Left cardiac atrium (tissue), 4 donors: ENCODE measurements at regions of chr2 and their contacts with region 1.

Region 1: GRCh38 chr2:127479219-127479825 is 47.0 kb downstream of the IWS1 start:
- DNase-seq: no peak
- ATAC-seq: peak; percentile 76 to 82

Region 2: GRCh38 chr2:127324635-127325034 is 154.7 kb before region 1 on chr2:
- intact Hi-C with region 1: loop called (anchors 2 to 10 kb)
- DNase-seq: no peak
- ATAC-seq: peak in 1 of 2 donors; percentile 63

Region 3: GRCh38 chr2:127437781-127438726 is 41.3 kb before region 1 on chr2:
- intact Hi-C with region 1: no loop called
- DNase-seq: no peak
- ATAC-seq: peak in 1 of 2 donors; percentile 33

Region 4: GRCh38 chr2:127597984-127598380 is 118.7 kb after region 1 on chr2:
- intact Hi-C with region 1: no loop called
- DNase-seq: no peak
- ATAC-seq: no peak